ENCODE measurements at regions of chr5 and their contacts with region 1.

Region 1: GRCh38 chr5:147223948-147224791 is 10.7 kb upstream of the STK32A start:
- DNase-seq: no peak
- H3K4me3 ChIP-seq: no peak overlapping the region
- H3K27ac ChIP-seq: no peak overlapping the region
- H3K4me1 ChIP-seq: no peaks in the 10 kb centered on the region
- H3K27me3 ChIP-seq: no peaks in the 10 kb centered on the region
- CTCF ChIP-seq: peak in 3 of 4 experiments; percentile 30 to 56 (median 44)
- POLR2A ChIP-seq: no peak

Region 2: DNA sequence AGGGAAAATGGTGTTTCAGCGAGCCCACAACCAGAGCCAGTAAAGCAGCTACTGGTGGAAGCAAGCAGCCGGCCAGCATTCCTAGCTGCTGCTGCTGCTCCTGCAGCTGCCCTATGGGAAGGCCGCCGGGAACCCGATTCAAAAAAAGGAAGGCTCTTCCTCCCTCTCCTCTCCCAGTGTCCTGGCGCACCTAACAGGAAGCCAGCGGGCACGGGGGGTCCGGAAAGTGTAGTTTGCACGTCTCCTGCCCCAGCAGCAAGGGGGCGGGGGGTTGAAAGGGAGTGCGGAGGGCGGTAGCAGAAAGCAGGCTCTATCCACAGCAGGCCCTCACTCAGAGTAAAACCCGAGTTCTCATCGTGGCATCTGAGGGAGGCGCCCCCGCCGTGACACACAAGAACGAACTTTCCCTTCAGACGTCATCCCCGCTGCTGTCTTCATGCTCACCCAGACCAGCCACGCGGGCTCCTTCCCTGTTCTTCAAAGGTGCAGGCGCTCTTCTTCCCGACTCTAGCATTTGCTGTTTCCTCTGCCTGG is 1367.8 kb before region 1 on chr5:
- intact Hi-C with region 1: no loop called
- DNase-seq: peak; percentile 19
- H3K4me3 ChIP-seq: peak overlapping the region; percentile 23 to 29
- H3K27ac ChIP-seq: peak overlapping the region; percentile 16 to 64
- H3K4me1 ChIP-seq: no peaks in the 10 kb centered on the region
- H3K27me3 ChIP-seq: no peaks in the 10 kb centered on the region
- CTCF ChIP-seq: peak in 2 of 4 experiments; percentile 4 to 22
- POLR2A ChIP-seq: no peak

Region 3: GRCh38 chr5:147369742-147370374 is 145.7 kb after region 1 on chr5:
- intact Hi-C with region 1: loop called (anchors 5 kb)
- DNase-seq: no peak
- H3K4me3 ChIP-seq: no peak overlapping the region
- H3K27ac ChIP-seq: no peak overlapping the region
- H3K4me1 ChIP-seq: no peaks in the 10 kb centered on the region
- H3K27me3 ChIP-seq: peaks cover 3% of the 10 kb centered on the region
- CTCF ChIP-seq: peak in 3 of 4 experiments; percentile 25 to 55 (median 50)
- POLR2A ChIP-seq: no peak

Region 4: DNA sequence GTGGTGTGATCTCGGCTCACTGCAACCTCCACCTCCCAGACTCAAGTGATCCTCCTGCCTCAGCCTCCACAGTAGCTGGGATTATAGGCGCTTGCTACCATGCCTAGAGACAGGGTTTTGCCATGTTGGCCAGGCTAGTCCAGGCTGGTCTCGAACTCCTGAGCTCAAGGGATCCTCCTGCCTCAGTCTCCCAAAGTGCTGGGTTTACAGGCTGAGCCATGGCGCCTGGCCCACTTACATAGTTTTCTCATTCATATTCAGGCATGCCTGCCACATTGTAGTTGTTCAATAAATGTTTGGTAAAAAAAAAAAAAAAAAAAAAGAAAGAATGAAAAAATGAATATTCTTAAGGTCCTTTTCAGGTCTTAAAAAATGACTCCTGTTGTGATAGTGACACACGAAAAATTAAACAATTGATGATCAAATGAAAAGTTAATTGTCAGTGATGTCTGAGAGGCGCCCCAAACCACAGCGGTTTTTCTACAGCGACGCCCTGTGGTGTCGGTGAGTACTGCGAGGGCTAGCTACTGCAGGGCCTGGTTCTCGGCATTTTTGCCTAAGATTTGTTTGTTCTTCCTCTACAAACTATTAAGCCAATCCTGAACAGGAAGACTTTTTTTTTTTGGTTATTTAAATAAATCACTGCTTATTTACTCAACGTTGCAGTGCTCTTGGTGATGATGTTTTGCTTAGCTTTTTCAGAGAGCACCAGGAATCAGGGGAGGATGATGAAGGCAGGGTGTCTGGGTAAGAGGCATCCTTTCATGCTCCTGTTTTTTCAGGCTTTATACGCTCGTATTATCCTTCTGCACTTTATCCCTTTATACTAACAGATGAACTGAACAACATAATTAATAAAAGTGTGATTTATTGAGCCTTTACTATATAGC is 352.7 kb after region 1 on chr5:
- intact Hi-C with region 1: loop called (anchors 2 kb)
- DNase-seq: peak; percentile 19
- H3K4me3 ChIP-seq: no peak overlapping the region
- H3K27ac ChIP-seq: no peak overlapping the region
- H3K4me1 ChIP-seq: no peaks in the 10 kb centered on the region
- H3K27me3 ChIP-seq: no peaks in the 10 kb centered on the region
- CTCF ChIP-seq: peak; percentile 51 to 77 (median 61)
- POLR2A ChIP-seq: no peak